CD4-positive, alpha-beta memory T cell (primary cell): ENCODE measurements at regions of chr11 and their contacts with region 1.

Region 1: GRCh38 chr11:72222907-72223614 is 1.5 kb upstream of the INPPL1 start:
- DNase-seq: peak; percentile 91 to 95 (median 92)
- H3K4me3 ChIP-seq: peak overlapping the region; percentile 48 to 83
- H3K4me3 Mint-ChIP-seq: peak overlapping the region; percentile 89 to 96 (median 91)
- H3K27ac ChIP-seq: peak overlapping the region; percentile 72
- H3K27ac Mint-ChIP-seq: peak overlapping the region; percentile 89 to 96 (median 95)
- H3K4me1 ChIP-seq: peaks cover 19% of the 10 kb centered on the region
- H3K4me1 Mint-ChIP-seq: peaks cover 8 to 31% (median 19%) of the 10 kb centered on the region in 4 donors
- H3K27me3 ChIP-seq: no peaks in the 10 kb centered on the region
- H3K27me3 Mint-ChIP-seq: peaks cover 0 to 7% of the 10 kb centered on the region in 2 donors

Region 2: DNA sequence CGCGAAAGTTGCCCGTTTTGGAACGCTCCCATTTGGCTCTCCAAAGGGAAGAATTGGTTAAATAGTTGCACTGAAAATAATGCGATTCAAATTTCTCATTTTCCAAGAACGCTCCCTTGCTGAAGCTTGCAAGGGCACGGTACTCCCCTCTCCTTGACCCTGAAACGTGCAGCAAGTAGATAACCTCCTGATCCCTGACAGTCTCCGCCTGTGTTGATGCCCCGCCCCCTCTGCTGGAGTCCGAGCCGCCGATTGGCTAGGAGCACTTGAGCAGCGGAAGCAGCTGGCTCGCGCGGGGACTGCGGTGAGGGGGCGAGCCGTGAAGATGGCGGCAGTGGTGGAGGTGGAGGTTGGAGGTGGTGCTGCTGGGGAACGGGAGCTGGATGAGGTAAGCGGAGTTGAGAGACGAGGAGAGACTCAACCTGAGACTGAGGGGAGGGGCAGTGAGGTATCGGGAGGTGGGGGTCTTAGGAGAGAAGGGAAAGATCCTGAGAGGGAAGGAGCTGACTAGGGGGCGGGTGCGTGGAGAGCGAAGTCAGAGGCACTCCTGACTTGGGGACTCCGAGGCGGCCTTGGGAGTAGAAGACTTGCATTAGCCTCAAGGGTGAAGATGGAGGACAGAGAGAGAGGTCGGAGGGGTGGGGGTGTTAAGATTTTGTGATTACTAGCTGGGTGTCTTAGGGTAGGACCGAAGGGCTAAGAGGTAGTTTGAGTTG is 294.2 kb before region 1 on chr11 and contains the start of gene RNF121:
- CTCF ChIA-PET with region 1: interaction called, 5 read pairs
- POLR2A ChIA-PET with region 1: interaction called, 16 read pairs
- intact Hi-C with region 1: loop called (anchors 2 kb)
- DNase-seq: peak; percentile 96 to 99 (median 96)
- H3K4me3 ChIP-seq: peak within 1 kb of the TSS; percentile 92 to 96
- H3K4me3 Mint-ChIP-seq: peak within 1 kb of the TSS; percentile 95 to 100 (median 98)
- H3K27ac ChIP-seq: peak within 1 kb of the TSS; percentile 84
- H3K27ac Mint-ChIP-seq: peak within 1 kb of the TSS; percentile 92 to 100 (median 99)
- H3K4me1 ChIP-seq: peaks cover 41% of the 10 kb centered on the region
- H3K4me1 Mint-ChIP-seq: peaks cover 40 to 60% (median 50%) of the 10 kb centered on the region in 4 donors
- H3K27me3 ChIP-seq: no peaks in the 10 kb centered on the region
- H3K27me3 Mint-ChIP-seq: no peaks in the 10 kb centered on the region
- total RNA-seq, gene RNF121: 28.0 to 33.0 TPM

Region 3: DNA sequence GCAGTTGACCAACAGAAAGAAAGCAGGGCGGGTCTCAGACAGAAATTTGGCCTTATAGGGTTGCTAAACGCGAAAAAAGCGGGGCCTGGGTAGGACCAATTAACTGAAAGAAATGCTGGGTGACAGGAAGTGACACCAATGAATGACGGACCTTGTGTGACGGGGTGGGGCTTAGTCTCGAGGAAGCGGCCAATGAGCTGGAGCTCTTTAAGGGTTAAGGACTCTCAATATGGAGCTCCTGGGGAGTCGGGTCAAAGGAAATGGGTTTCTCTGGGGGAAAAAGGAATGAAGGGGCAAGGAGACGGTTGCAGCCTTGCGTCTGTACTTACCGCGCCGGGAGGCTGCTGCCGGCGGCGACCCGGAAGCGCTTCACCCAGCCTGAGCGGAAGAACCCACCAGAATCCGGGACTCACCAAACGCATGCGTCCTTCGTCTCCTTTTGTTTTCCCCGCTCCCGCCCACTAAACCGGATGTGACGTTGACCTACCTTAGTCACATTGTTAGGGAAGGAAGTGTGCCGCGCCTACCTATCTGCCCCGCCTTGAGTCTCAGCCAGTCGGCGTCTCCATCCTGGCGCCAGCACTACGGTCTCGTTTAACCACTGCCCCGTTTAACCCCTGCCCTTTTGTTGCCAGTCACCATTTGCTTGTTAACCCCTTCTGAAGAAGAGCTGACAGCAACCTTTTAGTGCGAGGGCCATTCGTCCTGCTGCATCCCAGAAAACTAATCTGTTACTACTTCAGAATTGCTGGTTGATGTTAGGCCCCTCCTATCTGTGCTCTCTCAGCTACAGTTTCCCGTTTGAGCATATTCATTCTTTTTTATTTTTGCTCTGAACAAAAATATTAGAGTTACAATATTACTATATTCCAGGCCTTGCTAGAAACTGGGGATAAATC is 110.5 kb before region 1 on chr11 and contains the start of gene ANAPC15:
- CTCF ChIA-PET with region 1: interaction called, 6 read pairs
- POLR2A ChIA-PET with region 1: interaction called, 20 read pairs
- intact Hi-C with region 1: loop called (anchors 1 kb)
- DNase-seq: peak; percentile 98 to 100 (median 99)
- H3K4me3 ChIP-seq: peak within 1 kb of the TSS; percentile 79 to 97
- H3K4me3 Mint-ChIP-seq: peak within 1 kb of the TSS; percentile 96 to 99 (median 97)
- H3K27ac ChIP-seq: peak within 1 kb of the TSS; percentile 97
- H3K27ac Mint-ChIP-seq: peak within 1 kb of the TSS; percentile 98 to 100 (median 99)
- H3K4me1 ChIP-seq: peaks cover 18% of the 10 kb centered on the region
- H3K4me1 Mint-ChIP-seq: peaks cover 15 to 34% (median 23%) of the 10 kb centered on the region in 4 donors
- H3K27me3 ChIP-seq: no peaks in the 10 kb centered on the region
- H3K27me3 Mint-ChIP-seq: peaks cover 2 to 3% of the 10 kb centered on the region in 2 donors
- total RNA-seq, gene ANAPC15: 38.6 to 40.2 TPM

Region 4: DNA sequence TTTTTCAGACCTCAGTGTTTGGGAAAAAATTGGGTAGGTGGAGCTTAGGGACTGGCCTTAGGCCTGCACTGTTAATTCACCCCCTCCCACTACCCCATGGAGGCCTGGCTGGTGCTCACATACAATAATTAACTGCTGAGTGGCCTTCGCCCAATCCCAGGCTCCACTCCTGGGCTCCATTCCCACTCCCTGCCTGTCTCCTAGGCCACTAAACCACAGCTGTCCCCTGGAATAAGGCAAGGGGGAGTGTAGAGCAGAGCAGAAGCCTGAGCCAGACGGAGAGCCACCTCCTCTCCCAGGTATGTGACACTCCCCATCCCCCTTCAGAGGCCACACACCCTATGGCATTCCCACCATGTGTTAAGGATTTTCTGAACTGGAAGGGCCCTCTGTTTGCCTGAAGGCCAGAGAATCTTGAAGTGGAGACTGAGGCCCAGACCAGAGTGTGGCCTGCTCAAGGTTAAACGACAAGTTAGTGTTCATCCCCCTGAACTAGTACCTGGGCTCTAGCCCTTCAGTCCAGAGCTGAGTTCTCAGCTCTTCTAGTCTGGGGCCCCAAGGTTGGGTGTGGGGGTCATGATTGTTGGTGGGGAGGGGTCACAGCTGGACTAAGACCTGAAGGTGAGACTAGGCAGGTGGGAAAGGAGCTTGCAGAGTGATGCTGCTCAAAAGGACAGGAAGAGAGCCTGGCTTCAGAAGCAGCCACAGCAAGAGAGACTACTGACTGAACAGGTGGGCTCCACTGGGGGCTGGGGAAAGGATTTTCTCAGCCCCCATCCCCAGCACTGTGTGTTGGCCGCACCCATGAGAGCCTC is 33.4 kb before region 1 on chr11:
- CTCF ChIA-PET with region 1: interaction called, 18 read pairs
- POLR2A ChIA-PET with region 1: no interaction called
- intact Hi-C with region 1: no loop called
- DNase-seq: no peak
- H3K4me3 ChIP-seq: no peak overlapping the region
- H3K4me3 Mint-ChIP-seq: no peak overlapping the region
- H3K27ac ChIP-seq: no peak overlapping the region
- H3K27ac Mint-ChIP-seq: no peak overlapping the region
- H3K4me1 ChIP-seq: no peaks in the 10 kb centered on the region
- H3K4me1 Mint-ChIP-seq: no peaks in the 10 kb centered on the region
- H3K27me3 ChIP-seq: no peaks in the 10 kb centered on the region
- H3K27me3 Mint-ChIP-seq: no peaks in the 10 kb centered on the region